ENCODE measurements at regions of chr1 and their contacts with region 1.

Region 1: DNA sequence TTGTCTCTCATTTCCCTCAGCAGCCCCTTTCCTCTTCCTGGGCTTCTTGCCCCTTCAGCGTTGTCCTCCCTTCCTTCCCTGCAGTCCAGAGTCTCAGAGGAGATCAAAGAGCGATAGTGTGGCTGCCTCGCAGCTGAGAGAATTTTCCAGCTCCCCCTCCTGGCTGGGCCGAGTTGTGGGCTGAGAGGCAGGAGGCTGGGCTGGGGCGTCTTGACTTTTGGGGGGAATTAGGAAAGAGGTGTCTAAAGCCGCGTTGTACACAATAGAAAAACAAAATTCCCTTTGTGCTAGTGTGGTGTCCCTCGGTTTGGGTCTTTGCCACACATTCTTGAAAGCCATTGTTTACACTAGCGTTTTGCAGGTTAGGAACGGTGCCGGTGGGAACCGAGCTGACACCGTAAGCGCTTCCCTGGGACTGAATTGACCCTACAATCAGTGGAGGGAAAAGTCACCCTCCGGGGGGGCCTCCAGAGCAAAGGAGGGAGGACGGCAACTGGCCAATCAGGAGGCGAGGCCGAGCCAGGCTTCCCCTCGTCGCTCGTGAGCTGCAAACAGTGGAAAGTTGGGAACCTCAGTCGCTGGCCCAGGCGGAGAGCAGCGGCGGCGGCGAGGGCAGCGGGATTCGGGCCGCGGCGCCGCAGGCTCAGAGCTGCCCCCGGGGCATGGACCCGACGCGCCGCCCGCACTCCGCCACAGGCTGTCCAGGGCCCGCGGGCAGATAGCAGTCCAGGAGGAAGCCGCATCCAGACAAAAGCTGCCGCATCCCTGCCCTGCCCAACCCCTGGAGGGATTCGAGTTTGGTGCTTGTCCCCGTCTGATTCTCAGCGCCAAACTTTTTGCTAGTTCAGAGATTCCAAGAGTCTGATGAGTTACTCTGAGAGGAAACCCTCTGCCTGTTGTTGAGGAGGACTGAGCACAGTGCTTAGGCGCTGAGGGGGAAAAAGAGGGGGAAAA is at the start of gene HMCN1:
- DNase-seq: peak; percentile 62
- H3K4me3 ChIP-seq: peak within 1 kb of the TSS; percentile 59 to 75 (median 62)
- H3K27ac ChIP-seq: peak within 1 kb of the TSS; percentile 53
- H3K4me1 ChIP-seq: peaks cover 19% of the 10 kb centered on the region
- H3K27me3 ChIP-seq: no peaks in the 10 kb centered on the region
- CTCF ChIP-seq: peak; percentile 36 to 60
- total RNA-seq, gene HMCN1: 6.4 to 60.2 TPM

Region 2: DNA sequence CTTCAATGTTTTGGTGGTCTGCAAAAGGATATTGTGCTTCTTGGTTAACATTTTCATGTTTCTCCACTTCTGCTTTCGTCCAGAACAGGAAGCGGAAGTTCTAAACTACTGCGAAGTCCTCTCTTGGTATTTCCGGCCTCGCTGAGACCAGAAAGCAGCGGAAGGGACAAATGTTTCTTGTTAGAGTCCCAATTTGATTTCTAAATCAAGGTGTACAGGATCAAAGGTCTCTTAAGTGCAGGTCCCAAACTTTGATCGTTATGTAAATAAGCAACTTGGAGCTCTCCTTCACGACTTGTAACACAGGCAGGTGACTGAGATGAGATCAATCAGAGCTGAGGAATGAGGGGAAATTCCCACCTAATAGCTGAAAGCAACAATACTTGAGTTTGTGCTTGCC is 40.0 kb before region 1 on chr1:
- CTCF ChIA-PET with region 1: no interaction called
- dilution Hi-C with region 1: no loop called
- in situ Hi-C with region 1: no loop called
- intact Hi-C with region 1: no loop called
- DNase-seq: no peak
- H3K4me3 ChIP-seq: no peak overlapping the region
- H3K27ac ChIP-seq: no peak overlapping the region
- H3K4me1 ChIP-seq: no peaks in the 10 kb centered on the region
- H3K27me3 ChIP-seq: no peaks in the 10 kb centered on the region
- CTCF ChIP-seq: no peak

Region 3: DNA sequence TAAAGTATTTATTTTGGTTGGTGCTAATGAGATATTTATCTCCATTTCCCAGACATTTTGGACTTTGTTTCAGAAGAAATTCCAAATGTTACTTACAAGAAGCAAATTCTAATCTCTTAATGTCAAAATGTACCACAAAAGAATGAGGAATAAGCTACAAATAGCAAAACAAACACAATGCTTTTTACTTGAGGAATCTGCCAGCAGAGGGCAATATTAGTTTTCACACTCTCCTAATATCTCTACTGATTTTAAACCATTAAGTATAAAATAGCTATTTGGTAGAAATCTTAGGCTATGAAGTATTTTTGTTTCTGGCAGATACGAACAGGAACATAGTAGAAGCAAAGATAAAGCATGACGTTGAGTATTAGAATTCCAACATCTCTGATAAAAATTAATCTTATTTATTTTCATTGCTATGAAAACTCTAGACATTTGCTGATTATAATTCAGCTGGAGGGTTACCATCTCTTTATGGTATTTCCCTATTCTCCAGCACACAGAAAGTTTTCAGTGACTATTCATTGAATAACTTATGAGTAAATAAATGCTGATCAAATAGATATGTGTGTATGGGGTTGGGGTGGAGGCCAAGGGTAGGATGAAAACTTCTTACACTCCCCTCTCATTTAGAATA is 13.3 kb before region 1 on chr1:
- CTCF ChIA-PET with region 1: no interaction called
- dilution Hi-C with region 1: no loop called
- in situ Hi-C with region 1: no loop called
- intact Hi-C with region 1: loop called (anchors 1 kb)
- DNase-seq: peak; percentile 28
- H3K4me3 ChIP-seq: no peak overlapping the region
- H3K27ac ChIP-seq: peak overlapping the region; percentile 86
- H3K4me1 ChIP-seq: peaks cover 24% of the 10 kb centered on the region
- H3K27me3 ChIP-seq: no peaks in the 10 kb centered on the region
- CTCF ChIP-seq: peak; percentile 63 to 65

Region 4: GRCh38 chr1:185813401-185813979 is 79.4 kb after region 1 on chr1:
- CTCF ChIA-PET with region 1: no interaction called
- dilution Hi-C with region 1: no loop called
- in situ Hi-C with region 1: no loop called
- intact Hi-C with region 1: loop called (anchors 5 kb)
- DNase-seq: peak; percentile 45
- H3K4me3 ChIP-seq: no peak overlapping the region
- H3K27ac ChIP-seq: no peak overlapping the region
- H3K4me1 ChIP-seq: no peaks in the 10 kb centered on the region
- H3K27me3 ChIP-seq: no peaks in the 10 kb centered on the region
- CTCF ChIP-seq: peak; percentile 61 to 67

Measured in mammary epithelial cell (primary cell).